Activated CD4-positive, alpha-beta memory T cell treated with anti-CD3 and anti-CD28 coated beads, Interleukin-2, amount 10 ng/mL, durations not matched to agents 7 days and 5 days (primary cell): ENCODE measurements at regions of chr5 and their contacts with region 1.

Region 1: DNA sequence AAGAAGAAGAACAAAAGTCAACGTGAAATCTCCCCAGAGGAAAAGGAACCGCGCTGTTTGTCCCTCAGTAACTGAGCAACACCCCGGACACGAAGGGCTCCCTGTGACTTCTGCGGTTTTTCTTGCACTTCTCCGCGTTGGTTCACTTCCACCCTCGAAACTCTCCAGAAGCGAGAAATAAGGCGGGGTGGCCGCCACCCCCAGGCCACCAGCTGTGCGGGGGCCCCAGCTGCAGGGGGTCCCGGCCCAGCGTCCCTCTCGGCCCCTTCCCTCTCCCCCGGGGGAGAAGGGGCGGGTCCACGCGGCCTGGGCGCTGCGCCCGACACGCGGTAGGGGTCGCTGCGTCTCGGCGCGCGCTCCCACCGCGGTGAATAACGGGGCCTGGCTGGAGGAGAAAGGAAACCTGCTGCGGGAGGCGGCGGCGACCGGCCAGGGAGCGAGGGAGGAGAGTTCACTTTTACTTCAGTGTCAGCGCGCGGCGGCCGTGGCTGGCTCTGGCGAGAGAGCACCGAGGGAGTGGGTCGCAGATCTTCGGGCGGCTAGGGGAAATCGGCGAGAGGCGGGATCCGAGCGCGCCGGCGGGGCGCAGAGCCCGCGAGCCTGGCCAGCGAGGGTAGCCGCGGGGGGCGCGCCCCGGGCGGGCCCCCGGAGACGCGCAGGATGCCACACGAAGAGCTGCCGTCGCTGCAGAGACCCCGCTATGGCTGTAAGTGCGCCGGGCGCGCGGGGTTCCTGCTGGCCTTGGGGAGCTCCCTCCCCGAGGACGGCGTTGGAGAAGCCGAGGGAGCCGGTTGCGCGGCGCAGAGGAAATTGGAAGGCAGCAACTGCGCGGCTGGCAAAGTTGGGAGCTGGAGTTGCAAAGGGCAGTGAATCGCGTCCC is at the start of gene IQGAP2:
- DNase-seq: peak; percentile 86
- H3K4me3 Mint-ChIP-seq: peak within 1 kb of the TSS; percentile 93
- H3K27ac Mint-ChIP-seq: peak within 1 kb of the TSS; percentile 99
- H3K4me1 Mint-ChIP-seq: peaks cover 63% of the 10 kb centered on the region
- H3K27me3 Mint-ChIP-seq: no peaks in the 10 kb centered on the region
- total RNA-seq, gene IQGAP2: 118 to 124 TPM

Region 2: GRCh38 chr5:76256116-76256889 is 146.8 kb before region 1 on chr5:
- CTCF ChIA-PET with region 1: interaction called, 18 read pairs
- POLR2A ChIA-PET with region 1: interaction called, 4 read pairs
- DNase-seq: peak; percentile 75
- H3K4me3 Mint-ChIP-seq: no peak overlapping the region
- H3K27ac Mint-ChIP-seq: no peak overlapping the region
- H3K4me1 Mint-ChIP-seq: peaks cover 10% of the 10 kb centered on the region
- H3K27me3 Mint-ChIP-seq: peaks cover 16% of the 10 kb centered on the region

Region 3: GRCh38 chr5:76303921-76304320 is 99.2 kb before region 1 on chr5:
- CTCF ChIA-PET with region 1: no interaction called
- POLR2A ChIA-PET with region 1: interaction called, 12 read pairs
- DNase-seq: peak; percentile 52
- H3K4me3 Mint-ChIP-seq: no peak overlapping the region
- H3K27ac Mint-ChIP-seq: no peak overlapping the region
- H3K4me1 Mint-ChIP-seq: peaks cover 33% of the 10 kb centered on the region
- H3K27me3 Mint-ChIP-seq: peaks cover 2% of the 10 kb centered on the region

Region 4: DNA sequence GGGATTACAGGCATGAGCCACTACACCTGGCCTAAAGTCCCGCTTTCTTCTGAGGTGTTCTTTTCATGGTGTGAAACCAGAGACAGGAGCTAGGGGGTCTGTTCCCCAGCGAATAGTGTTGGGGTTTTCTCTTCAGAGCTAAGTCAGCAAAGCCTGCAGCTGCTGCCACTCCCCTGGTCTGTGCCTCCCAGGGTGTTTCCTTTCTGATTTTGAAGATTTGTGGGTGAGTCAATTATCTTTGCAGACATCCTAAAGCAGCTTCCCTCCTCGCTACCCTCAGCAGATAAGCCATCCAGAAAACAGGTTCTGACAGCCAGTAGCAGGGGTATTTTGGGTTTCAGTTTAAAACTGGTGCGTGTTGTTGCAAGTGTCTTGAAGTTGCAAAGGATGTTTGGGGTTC is 72.0 kb before region 1 on chr5:
- CTCF ChIA-PET with region 1: interaction called, 34 read pairs
- POLR2A ChIA-PET with region 1: interaction called, 209 read pairs
- DNase-seq: peak; percentile 69
- H3K4me3 Mint-ChIP-seq: peak overlapping the region; percentile 19
- H3K27ac Mint-ChIP-seq: peak overlapping the region; percentile 95
- H3K4me1 Mint-ChIP-seq: peaks cover 77% of the 10 kb centered on the region
- H3K27me3 Mint-ChIP-seq: no peaks in the 10 kb centered on the region

Region 5: DNA sequence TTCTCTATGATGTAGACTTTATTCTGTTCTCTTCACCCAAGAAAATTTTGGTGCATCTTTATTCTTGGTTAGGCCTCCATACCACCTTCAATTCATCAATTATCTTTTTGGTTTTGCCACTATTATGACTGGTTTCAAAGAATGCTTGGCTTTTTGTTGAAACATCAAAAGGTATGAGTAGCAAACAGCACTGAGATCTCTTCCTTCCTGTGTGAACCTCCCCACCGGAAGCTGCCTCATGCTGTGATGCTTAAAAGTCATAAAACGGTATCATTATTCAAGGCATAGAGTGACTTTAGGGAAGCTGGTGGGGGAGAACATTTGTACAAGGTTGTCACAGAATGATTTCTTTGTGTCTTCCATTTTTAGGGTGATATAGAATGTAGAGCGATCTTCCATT is 70.5 kb after region 1 on chr5:
- CTCF ChIA-PET with region 1: interaction called, 19 read pairs
- POLR2A ChIA-PET with region 1: interaction called, 42 read pairs
- DNase-seq: peak; percentile 77
- H3K4me3 Mint-ChIP-seq: no peak overlapping the region
- H3K27ac Mint-ChIP-seq: peak overlapping the region; percentile 76
- H3K4me1 Mint-ChIP-seq: peaks cover 74% of the 10 kb centered on the region
- H3K27me3 Mint-ChIP-seq: no peaks in the 10 kb centered on the region

Region 6: DNA sequence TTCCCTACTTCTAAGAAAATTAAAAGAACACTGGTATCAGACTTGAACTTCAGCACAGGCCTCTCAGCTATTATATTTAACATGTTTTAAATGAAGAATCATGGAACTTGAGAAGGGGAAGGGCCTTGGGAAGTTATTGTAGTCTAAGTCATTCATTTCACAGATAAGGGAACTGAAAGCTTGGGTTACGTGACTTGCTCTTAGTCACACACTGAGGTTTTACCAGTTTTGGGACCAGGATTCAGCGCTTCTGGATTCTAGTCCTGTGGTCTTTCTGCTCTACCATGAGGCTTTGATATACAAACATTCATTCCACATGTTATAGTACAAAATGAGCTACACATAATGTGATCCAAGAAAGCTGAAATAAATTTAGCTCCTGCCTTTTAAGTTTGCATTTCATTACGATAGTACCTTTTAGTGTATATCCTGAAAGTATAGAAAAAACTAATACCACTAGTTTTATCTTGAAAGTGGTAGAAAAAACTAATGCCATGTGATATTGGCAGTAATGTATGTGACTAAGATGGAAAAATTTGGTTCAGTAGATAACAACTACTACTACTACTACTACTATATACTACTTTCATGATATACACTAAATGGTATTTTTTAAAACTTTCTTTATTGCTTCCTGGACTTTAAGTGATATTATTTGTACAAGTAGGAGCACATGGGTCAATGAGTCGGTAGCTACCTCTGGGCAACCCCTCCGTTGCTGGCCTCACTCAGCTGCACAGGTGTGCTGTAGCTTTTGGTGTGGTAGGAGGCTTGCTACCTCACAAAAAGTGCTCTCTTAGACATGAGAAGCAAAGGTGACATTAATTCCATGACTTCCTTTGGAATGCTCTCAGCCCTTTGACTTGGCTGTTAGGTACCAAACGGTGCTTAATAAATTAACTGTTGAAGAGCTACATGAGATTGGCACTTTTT is 179.4 kb after region 1 on chr5:
- CTCF ChIA-PET with region 1: interaction called, 51 read pairs
- POLR2A ChIA-PET with region 1: interaction called, 28 read pairs
- DNase-seq: no peak
- H3K4me3 Mint-ChIP-seq: no peak overlapping the region
- H3K27ac Mint-ChIP-seq: peak overlapping the region; percentile 26
- H3K4me1 Mint-ChIP-seq: peaks cover 29% of the 10 kb centered on the region
- H3K27me3 Mint-ChIP-seq: no peaks in the 10 kb centered on the region